OCI-LY7 (cell line): ENCODE measurements at regions of chr15 and their contacts with region 1.

Region 1: DNA sequence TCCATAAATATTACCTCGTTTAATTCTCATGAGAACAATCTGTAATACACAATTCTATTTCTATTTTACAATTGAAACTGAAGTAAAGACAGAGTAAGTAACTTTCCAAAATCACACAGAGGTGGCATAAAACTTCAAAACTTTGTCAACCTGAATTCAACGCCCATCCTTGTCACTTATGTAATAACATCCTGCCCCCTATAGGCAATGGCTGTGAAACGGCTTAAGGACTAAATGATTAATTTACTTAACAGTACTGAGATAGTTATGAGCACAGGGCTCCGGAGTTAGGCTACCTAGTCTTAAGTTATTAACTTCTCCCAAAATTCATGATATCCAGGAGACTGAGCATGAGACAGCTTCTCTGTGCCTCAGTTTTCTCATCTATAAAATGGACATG is 293.1 kb upstream of the CHRM5 start:
- DNase-seq: peak; percentile 65
- H3K4me3 ChIP-seq: no peak overlapping the region
- H3K27ac ChIP-seq: no peak overlapping the region
- H3K4me1 ChIP-seq: peaks cover 47% of the 10 kb centered on the region
- CTCF ChIP-seq: peak; percentile 90

Region 2: GRCh38 chr15:33242669-33243191 is 432.5 kb before region 1 on chr15:
- CTCF ChIA-PET with region 1: no interaction called
- POLR2A ChIA-PET with region 1: no interaction called
- intact Hi-C with region 1: loop called (anchors 1 kb)
- DNase-seq: peak; percentile 44
- H3K4me3 ChIP-seq: no peak overlapping the region
- H3K27ac ChIP-seq: no peak overlapping the region
- H3K4me1 ChIP-seq: peaks cover 9% of the 10 kb centered on the region
- CTCF ChIP-seq: peak; percentile 83

Region 3: DNA sequence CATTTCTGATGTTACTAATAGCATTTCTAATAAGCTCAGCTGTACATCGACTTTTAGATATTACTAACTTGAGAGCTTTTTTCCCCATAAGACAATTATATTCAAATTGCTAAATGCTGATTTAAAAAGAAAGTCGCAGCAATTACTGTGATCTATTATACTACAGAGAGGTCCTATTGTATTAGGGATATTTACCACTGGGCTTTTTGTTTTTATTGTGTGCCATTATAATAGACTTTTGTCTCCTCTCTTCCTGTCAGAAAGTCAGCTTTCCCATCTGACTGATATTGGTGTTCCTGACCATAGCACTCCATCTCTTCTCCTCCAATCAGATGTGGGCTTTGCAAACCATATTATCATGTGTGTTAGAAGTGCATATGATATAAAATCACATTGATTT is 391.7 kb before region 1 on chr15:
- CTCF ChIA-PET with region 1: no interaction called
- POLR2A ChIA-PET with region 1: no interaction called
- intact Hi-C with region 1: no loop called
- DNase-seq: no peak
- H3K4me3 ChIP-seq: no peak overlapping the region
- H3K27ac ChIP-seq: no peak overlapping the region
- H3K4me1 ChIP-seq: peaks cover 12% of the 10 kb centered on the region
- CTCF ChIP-seq: no peak

Region 4: GRCh38 chr15:33309602-33310276 is 365.5 kb before region 1 on chr15:
- CTCF ChIA-PET with region 1: no interaction called
- POLR2A ChIA-PET with region 1: no interaction called
- intact Hi-C with region 1: loop called (anchors 1 kb)
- DNase-seq: peak; percentile 27
- H3K4me3 ChIP-seq: no peak overlapping the region
- H3K27ac ChIP-seq: no peak overlapping the region
- H3K4me1 ChIP-seq: peaks cover 11% of the 10 kb centered on the region
- CTCF ChIP-seq: peak; percentile 69

Region 5: GRCh38 chr15:33322091-33322490 is 353.2 kb before region 1 on chr15:
- CTCF ChIA-PET with region 1: no interaction called
- POLR2A ChIA-PET with region 1: no interaction called
- intact Hi-C with region 1: loop called (anchors 1 kb)
- DNase-seq: no peak
- H3K4me3 ChIP-seq: no peak overlapping the region
- H3K27ac ChIP-seq: peak overlapping the region; percentile 87
- H3K4me1 ChIP-seq: peaks cover 51% of the 10 kb centered on the region
- CTCF ChIP-seq: no peak

Region 6: DNA sequence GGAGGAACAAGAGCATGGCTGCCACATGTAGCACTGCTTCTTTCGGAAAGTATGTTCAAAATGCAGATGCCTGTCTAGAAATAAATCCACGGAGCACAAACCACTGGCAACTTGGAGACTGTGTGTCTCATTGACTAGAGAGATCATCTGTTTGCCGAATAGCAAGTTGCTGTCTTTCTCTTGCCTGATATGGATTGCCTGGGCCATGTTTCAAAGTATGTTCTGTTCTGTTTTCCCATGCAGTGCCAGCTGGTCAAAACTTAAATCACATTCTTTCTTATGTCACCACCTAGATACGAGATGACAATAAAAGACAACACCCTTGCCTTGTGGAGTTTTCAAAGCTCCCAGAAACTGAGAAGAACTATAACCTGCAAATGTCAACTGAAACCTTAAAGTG is 45.6 kb before region 1 on chr15:
- CTCF ChIA-PET with region 1: no interaction called
- POLR2A ChIA-PET with region 1: no interaction called
- intact Hi-C with region 1: no loop called
- DNase-seq: no peak
- H3K4me3 ChIP-seq: no peak overlapping the region
- H3K27ac ChIP-seq: no peak overlapping the region
- H3K4me1 ChIP-seq: no peaks in the 10 kb centered on the region
- CTCF ChIP-seq: no peak

Region 7: DNA sequence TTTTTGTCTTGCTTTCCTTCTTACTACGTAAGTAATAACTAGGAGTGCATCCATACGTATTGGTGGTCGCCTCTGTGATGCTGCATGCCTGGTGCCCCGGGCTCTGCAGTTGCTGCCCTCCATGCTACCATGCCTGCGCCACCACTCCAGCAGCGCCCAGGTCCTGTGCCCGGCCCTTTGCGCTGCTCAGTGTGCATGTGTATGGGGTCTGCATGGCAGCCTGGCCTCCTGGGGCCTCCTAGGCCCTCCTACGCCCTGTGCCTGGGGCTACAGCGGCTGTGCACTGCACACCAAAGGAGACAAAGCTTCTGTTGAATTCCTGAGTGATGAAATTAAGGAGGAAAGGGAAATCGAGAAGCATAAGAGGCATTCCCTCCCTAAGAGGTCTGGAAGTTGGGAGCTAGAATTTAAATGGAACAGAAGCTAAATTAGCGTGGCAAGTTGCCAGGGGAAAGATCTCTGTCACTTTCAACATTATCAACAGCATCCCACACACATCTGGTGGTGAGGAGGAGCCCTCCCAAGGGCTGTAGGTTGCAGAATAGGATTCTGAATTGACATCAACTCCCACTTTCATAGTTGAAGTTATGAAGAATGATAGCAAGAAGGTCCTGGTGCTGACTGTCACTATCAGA is 18.0 kb after region 1 on chr15:
- CTCF ChIA-PET with region 1: no interaction called
- POLR2A ChIA-PET with region 1: interaction called, 10 read pairs
- intact Hi-C with region 1: no loop called
- DNase-seq: no peak
- H3K4me3 ChIP-seq: no peak overlapping the region
- H3K27ac ChIP-seq: no peak overlapping the region
- H3K4me1 ChIP-seq: no peaks in the 10 kb centered on the region
- CTCF ChIP-seq: no peak